ENCODE measurements at regions of chr20 and their contacts with region 1.

Region 1: DNA sequence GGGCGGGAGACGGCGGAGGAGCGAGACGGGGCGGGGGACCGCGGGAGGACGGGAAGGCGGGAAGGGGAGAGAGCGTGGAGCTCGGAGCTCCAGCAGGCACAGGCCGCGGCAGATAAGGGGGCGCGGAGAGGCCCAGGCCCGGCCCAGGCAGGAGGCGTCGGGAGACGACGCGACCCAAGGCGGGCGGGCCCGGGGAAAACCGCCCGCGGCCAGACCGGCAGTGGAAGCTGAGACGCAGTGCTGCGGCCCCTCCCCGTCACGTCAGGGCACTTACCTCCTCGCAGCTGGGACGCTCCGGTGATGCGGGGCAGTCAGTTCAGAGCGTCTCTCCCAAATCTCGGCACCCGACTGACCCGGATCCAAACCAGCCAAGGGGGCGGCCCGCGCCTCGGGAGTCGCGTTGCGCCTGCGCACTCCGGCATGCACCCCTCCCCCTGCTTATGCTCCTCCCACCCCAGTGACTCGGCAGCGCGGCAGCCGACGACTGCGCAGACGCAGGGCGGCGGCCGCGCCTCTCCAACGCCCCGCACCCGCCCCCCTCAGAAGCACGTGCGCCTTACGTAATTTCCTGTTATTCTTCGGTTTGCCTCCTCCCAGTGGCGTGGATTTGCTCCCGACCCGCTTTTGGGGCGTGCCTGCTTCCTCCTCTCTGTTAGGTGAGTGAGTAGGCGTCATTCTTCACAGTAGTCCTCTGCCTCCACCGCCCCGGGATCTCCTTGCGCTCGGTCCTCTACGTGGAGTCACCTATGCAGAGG is at the start of gene OSER1:
- DNase-seq: peak; percentile 99
- ATAC-seq: peak; percentile 94
- H3K4me3 ChIP-seq: peak within 1 kb of the TSS; percentile 82
- H3K4me1 ChIP-seq: peaks cover 40% of the 10 kb centered on the region
- CTCF ChIP-seq: no peak
- total RNA-seq, gene OSER1: 32.1 to 40.1 (median 32.5) TPM

Region 2: DNA sequence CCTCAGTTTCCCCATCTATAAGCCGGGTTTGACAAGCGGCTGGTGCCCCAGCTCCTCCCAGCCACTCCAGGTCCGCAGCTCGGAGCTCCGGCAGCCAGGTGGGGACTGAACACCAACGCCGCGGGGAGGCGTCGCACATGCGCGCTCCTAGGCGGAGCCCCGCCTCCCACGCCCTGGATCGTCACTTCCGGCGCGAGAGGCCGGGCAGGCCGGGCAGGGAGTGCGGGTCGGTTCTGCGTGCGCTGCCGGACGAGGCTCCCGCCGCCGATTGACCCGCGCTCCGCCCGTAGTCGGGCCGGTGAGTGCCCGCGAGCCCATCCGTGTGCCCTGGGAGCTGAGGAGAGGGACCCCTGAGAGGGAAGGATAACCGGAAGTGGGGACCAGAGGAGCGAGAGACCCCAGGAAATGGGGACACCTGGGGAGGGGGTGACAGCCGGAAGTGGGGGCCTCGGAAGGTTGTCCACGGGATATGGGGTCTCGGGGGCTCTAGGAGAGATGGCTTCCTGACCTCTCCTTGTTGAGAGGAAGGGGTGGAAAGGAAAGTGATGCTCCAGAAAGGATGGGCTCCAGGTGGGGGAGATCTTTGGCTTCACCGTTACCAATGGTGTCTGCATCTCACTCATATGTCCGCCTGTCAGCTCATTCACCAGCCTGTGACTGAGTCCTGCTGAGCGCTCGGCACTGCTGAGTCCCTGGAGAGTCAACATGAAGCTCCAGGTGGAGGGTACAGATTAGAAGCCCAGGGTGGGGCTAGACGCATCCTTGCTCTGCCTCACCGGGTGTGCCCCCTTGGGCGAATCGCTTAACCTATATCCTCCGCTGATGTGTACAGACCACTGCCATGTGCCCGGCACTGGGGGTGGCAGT is 265.3 kb after region 1 on chr20 and contains the start of gene TTPAL:
- intact Hi-C with region 1: loop called in 1 of 2 experiments (anchors 10 kb)
- DNase-seq: peak; percentile 92 to 95 (median 94)
- ATAC-seq: peak; percentile 99
- H3K4me3 ChIP-seq: peak within 1 kb of the TSS; percentile 71
- H3K4me1 ChIP-seq: peaks cover 12% of the 10 kb centered on the region
- CTCF ChIP-seq: peak; percentile 43
- total RNA-seq, gene TTPAL: 7.2 to 10.2 (median 9.9) TPM

Measured in mucosa of descending colon (tissue), 3 donors.